Posterior cingulate gyrus (tissue), 11 donors: ENCODE measurements at regions of chr17 and their contacts with region 1.

Region 1: GRCh38 chr17:10226930-10227685 is 28.7 kb upstream of the GAS7 start:
- DNase-seq: peak in 7 of 10 donors; percentile 38 to 91 (median 61)

Region 2: DNA sequence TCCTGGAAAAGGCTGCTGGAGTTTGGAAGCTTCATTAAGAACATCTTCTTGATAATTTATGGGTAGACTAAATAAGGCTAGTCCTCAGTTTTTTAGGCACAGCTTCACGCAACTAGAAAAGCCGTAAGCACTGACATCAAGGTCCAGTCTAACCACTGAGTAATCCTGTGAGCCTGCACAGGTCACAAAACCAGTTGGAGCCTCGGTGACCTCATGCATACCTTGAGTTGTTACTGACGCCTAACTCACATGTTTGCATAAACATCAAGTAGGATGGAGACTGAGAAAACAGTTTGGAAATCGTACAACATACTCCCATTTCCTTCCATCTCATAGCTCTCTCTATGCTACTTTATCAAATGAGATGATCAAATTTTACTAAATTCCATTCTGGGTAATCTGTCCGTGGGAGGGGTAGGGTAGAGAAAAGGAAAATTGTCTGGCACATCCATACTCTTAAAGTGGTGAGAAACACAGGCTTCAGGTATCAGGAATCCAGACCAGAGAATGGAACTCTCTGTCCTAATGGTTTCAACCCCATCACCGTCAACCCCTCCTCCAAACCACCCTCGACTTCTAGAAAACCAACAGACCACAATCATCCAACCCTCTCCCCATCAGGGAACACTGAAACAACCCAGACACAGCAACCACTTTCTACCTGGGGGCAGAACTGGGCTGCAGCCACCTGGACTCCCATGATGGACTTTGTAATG is 258.0 kb before region 1 on chr17:
- intact Hi-C with region 1: loop called (anchors 1 kb)
- DNase-seq: peak in 1 of 10 donors; percentile 16

Region 3: DNA sequence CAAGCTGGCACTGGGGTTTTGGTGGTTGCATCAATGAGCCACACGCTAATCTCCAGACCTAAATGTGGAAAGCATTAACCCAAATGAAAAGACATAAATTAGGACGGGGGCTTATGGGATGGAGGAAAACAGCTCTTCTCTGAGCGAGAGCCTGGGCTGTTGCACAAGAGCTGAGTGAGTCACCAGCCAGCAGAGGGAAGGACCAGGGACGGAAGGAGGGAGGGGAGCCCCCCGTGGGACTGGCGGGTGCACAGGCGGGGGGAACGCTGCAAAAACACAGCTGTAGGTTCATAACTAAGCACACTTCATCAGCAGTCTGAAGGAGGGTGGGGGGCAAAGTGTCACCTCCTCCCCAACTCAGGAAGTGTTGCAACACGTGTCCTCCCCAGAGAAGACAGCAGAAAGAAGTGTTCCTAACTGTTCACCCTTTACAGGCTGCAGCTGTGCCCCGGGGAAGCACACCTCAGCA is 112.0 kb before region 1 on chr17:
- intact Hi-C with region 1: loop called (anchors 1 kb)
- DNase-seq: peak; percentile 57 to 97 (median 76)

Region 4: DNA sequence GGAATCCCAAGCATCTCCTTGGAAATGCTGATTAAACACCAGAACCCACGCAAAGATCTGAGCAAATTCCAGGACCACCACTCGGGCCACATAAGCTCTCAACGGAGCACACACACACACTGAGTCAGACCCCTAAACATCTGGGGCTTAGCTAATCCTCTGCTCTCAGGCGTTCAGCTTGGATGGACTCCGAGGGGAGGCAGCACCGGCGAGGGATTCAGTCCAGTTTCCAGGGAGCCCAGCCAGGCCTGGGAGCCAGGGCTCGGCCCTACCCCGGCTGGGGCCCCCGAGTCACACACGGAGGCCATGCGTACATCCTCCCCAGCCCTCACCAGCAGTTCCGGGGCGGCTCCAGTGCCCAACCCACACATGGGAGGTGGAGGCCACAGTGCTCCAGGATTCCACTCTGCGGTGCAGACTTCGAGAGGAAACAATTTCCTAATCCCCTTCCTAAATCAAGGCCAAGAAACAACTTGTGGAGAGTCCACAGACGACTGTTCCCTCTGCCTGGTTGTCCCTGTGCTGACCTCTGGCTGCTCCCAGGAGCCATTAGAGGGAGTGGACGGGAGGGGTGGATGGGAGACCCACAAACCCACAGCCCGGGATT is 99.2 kb before region 1 on chr17:
- intact Hi-C with region 1: loop called (anchors 5 kb)
- DNase-seq: peak in 7 of 10 donors; percentile 37 to 93 (median 57)